ENCODE measurements at regions of chr17 and their contacts with region 1.

Region 1: DNA sequence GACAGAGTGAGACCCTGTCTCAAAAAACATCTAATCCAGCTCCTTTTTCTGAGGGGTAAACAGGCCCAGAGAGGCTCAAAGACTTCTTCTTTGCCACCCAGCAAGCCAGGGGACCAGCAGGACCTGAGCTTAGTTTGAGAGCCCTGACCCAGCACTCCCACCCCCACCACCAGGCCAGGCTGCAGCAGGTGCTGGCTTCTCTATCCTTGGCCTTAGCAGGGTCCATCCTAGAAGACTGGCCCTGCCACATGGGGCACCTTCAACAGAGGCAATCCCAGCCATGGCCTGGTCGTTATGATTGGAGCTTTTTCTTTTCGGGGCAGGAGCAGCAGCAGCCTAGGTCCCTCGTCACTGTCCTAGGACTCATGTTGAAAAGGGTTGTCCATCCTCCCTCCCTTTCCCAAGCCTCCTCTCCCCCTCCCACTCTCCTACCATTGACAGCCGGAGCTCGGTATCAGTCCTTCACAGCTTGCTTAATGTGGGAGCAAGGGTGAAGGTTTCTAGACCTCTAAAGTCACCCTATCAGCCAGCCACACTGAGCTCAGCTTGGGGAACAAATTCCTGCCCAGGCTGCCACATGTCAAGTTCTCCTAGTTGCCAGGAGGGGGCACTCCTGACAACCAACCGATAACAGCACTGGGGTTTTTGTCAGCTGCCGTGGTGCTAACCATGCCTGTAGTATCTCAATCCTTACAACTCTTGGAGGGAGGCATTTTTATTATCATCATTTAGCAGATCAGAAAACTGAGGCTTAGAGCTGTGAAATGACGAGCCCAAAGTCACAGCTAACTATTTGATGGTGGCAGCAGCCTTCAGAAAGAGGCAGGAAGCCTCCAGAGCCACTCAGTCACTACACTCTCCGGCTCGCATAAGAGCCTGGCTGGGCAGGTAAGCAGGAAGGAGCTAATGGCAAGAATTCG is 11.2 kb downstream of the MRPL27 start:
- DNase-seq: peak; percentile 39 to 84 (median 49)
- ATAC-seq: peak; percentile 97
- H3K4me3 ChIP-seq: no peak overlapping the region
- H3K4me3 Mint-ChIP-seq: peak overlapping the region; percentile 13
- H3K27ac ChIP-seq: no peak overlapping the region
- H3K27ac Mint-ChIP-seq: peak overlapping the region; percentile 10
- H3K4me1 ChIP-seq: peaks cover 11% of the 10 kb centered on the region
- H3K4me1 Mint-ChIP-seq: peaks cover 9% of the 10 kb centered on the region
- H3K27me3 ChIP-seq: no peaks in the 10 kb centered on the region
- H3K27me3 Mint-ChIP-seq: no peaks in the 10 kb centered on the region
- CTCF ChIP-seq: peak; percentile 79

Region 2: GRCh38 chr17:49461580-49461979 is 900.2 kb before region 1 on chr17:
- CTCF ChIA-PET with region 1: no interaction called
- POLR2A ChIA-PET with region 1: no interaction called
- intact Hi-C with region 1: loop called in 1 of 2 experiments (anchors 5 kb)
- DNase-seq: no peak
- ATAC-seq: no peak
- H3K4me3 ChIP-seq: no peak overlapping the region
- H3K4me3 Mint-ChIP-seq: no peak overlapping the region
- H3K27ac ChIP-seq: no peak overlapping the region
- H3K27ac Mint-ChIP-seq: no peak overlapping the region
- H3K4me1 ChIP-seq: no peaks in the 10 kb centered on the region
- H3K4me1 Mint-ChIP-seq: no peaks in the 10 kb centered on the region
- H3K27me3 ChIP-seq: peaks cover 22 to 26% of the 10 kb centered on the region in 2 experiments
- H3K27me3 Mint-ChIP-seq: peaks cover 77% of the 10 kb centered on the region
- CTCF ChIP-seq: no peak

Region 3: DNA sequence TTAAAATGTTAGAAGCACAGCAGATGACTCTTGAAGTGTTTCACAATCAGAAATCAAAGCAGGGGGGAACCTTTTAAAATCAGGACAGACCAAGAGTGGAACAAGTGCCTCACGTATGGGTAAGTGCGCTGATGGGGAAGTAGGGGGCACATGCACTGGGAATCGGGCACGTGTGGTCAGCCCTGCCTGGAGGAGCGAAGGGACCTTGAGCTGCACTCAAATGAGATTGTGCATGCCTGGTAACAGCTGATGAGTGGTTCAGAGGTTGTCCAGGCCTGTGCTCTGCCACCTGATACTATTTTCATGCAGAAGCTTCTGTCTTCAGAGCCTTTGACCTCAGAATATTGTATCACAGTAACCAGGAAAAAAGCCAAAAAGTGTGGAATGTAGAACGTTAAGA is 29.6 kb before region 1 on chr17:
- CTCF ChIA-PET with region 1: no interaction called
- POLR2A ChIA-PET with region 1: no interaction called
- intact Hi-C with region 1: no loop called
- DNase-seq: no peak
- ATAC-seq: no peak
- H3K4me3 ChIP-seq: no peak overlapping the region
- H3K4me3 Mint-ChIP-seq: no peak overlapping the region
- H3K27ac ChIP-seq: no peak overlapping the region
- H3K27ac Mint-ChIP-seq: no peak overlapping the region
- H3K4me1 ChIP-seq: no peaks in the 10 kb centered on the region
- H3K4me1 Mint-ChIP-seq: peaks cover 12% of the 10 kb centered on the region
- H3K27me3 ChIP-seq: peaks cover 0 to 3% of the 10 kb centered on the region in 2 experiments
- H3K27me3 Mint-ChIP-seq: peaks cover 3% of the 10 kb centered on the region
- CTCF ChIP-seq: no peak

Region 4: GRCh38 chr17:50345432-50346312 is 16.1 kb before region 1 on chr17 and contains the start of gene XYLT2:
- CTCF ChIA-PET with region 1: interaction called, 12 read pairs
- POLR2A ChIA-PET with region 1: interaction called, 21 read pairs
- intact Hi-C with region 1: no loop called
- DNase-seq: peak; percentile 77 to 97 (median 92)
- ATAC-seq: peak; percentile 92
- H3K4me3 ChIP-seq: peak within 1 kb of the TSS; percentile 85
- H3K4me3 Mint-ChIP-seq: peak within 1 kb of the TSS; percentile 95
- H3K27ac ChIP-seq: peak within 1 kb of the TSS; percentile 53 to 65
- H3K27ac Mint-ChIP-seq: peak within 1 kb of the TSS; percentile 76
- H3K4me1 ChIP-seq: peaks cover 28% of the 10 kb centered on the region
- H3K4me1 Mint-ChIP-seq: peaks cover 34% of the 10 kb centered on the region
- H3K27me3 ChIP-seq: no peaks in the 10 kb centered on the region
- H3K27me3 Mint-ChIP-seq: no peaks in the 10 kb centered on the region
- CTCF ChIP-seq: no peak
- total RNA-seq, gene XYLT2: 11.0 to 12.2 TPM

Measured in CD4-positive, alpha-beta T cell (primary cell).